ENCODE measurements at regions of chrX and their contacts with region 1.

Region 1: GRCh38 chrX:40735325-40736169 is at the start of gene MED14:
- DNase-seq: peak; percentile 92 to 97
- ATAC-seq: peak; percentile 98
- H3K4me3 ChIP-seq: peak within 1 kb of the TSS; percentile 75 to 87
- H3K27ac ChIP-seq: peak within 1 kb of the TSS; percentile 68 to 85
- H3K4me1 ChIP-seq: peaks cover 0 to 2% of the 10 kb centered on the region in 2 donors
- H3K27me3 ChIP-seq: no peaks in the 10 kb centered on the region
- total RNA-seq, gene MED14: 51.3 to 52.0 TPM

Region 2: GRCh38 chrX:40792433-40792832 is 56.9 kb after region 1 on chrX:
- intact Hi-C with region 1: loop called in 1 of 2 experiments (anchors 10 kb)
- DNase-seq: no peak
- ATAC-seq: no peak
- H3K4me3 ChIP-seq: no peak overlapping the region
- H3K27ac ChIP-seq: no peak overlapping the region
- H3K4me1 ChIP-seq: no peaks in the 10 kb centered on the region
- H3K27me3 ChIP-seq: no peaks in the 10 kb centered on the region

Region 3: DNA sequence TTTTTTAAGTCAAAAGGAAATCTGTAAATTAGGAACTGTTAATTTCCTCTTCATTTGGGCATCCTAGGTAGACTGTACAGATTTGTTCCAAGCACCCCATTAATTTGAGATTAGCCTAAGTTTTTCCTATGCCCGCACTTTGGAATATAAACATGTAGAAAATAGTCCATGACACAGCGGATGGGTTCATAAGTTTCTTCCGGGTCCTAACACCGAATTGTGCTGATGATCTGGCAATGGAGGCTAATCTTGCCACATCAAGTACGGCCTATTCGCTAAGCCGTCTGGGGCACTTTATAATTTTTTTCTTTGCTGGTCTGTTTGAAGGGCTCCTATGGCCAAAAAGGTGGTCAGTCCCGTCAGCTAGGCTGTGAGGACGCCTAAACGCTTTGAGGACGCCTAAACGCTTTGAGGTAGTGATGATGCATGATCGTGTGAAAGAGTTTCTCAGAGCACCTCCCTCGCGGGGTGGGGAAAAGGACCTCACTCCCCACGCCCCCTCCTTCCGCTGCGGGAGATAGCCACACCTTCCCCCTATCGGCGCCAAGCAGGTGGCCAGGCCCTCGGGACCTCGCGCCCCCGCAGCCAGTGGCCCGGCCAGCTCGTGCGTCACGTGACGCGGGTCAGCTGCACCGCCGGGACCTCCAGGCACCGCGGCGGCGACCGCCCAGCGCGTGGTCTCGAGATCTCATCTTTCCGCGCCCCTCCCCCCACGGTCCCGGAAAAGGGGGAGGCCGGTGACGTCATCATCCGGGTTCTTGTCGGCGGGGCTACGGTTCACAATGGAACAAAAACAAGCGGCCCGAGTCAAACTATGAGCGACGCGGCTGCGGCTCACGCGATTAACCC is 348.7 kb after region 1 on chrX:
- intact Hi-C with region 1: loop called in 1 of 2 experiments (anchors 10 kb)
- DNase-seq: peak; percentile 98 to 100
- ATAC-seq: peak; percentile 94
- H3K4me3 ChIP-seq: peak overlapping the region; percentile 88 to 95
- H3K27ac ChIP-seq: peak overlapping the region in 1 of 2 donors; percentile 95
- H3K4me1 ChIP-seq: no peaks in the 10 kb centered on the region
- H3K27me3 ChIP-seq: no peaks in the 10 kb centered on the region